Common myeloid progenitor, CD34-positive (primary cell): ENCODE measurements at regions of chr6 and their contacts with region 1.

Region 1: DNA sequence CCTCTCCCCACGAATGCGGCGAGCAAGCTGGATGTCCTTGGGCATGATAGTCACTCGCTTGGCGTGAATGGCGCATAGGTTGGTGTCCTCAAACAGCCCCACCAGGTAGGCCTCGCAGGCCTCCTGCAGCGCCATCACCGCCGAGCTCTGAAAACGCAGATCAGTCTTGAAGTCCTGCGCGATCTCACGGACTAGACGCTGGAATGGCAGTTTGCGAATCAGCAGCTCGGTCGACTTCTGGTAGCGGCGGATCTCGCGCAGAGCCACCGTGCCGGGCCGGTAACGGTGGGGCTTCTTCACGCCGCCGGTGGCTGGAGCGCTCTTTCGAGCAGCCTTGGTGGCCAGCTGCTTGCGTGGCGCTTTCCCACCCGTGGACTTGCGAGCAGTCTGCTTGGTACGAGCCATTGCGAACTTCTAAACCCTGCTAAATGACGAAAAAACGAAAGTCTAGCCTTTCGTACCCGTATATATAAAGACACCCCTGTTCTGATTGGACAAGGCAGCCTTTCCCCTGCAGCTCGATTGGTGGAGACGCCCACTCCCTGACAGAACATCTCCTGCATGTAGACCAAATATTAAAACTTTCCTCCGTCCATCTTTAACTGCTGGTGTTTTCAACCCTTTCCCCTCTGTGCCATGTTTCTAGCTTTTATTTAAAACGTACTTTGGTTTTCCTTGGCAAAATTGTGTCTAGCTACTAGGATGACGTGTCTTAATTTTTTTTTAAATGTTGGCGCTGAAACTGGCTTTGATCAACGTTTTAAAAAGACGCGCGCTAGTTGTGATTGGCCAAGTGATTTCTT is 109.8 kb downstream of the HFE start:
- DNase-seq: peak; percentile 93 to 97 (median 96)
- H3K4me3 ChIP-seq: peak overlapping the region; percentile 50 to 99 (median 96)
- H3K27ac ChIP-seq: peak overlapping the region; percentile 46 to 91
- H3K4me1 ChIP-seq: peaks cover 15 to 46% (median 36%) of the 10 kb centered on the region in 4 experiments
- H3K27me3 ChIP-seq: no peaks in the 10 kb centered on the region

Region 2: GRCh38 chr6:26122793-26123674 is 74.0 kb before region 1 on chr6:
- CTCF ChIA-PET with region 1: interaction called, 24 read pairs
- POLR2A ChIA-PET with region 1: interaction called, 22 read pairs
- DNase-seq: peak; percentile 97 to 99 (median 98)
- H3K4me3 ChIP-seq: peak overlapping the region; percentile 56 to 100 (median 96)
- H3K27ac ChIP-seq: peak overlapping the region; percentile 84 to 96
- H3K4me1 ChIP-seq: peaks cover 11 to 38% (median 26%) of the 10 kb centered on the region in 4 experiments
- H3K27me3 ChIP-seq: no peaks in the 10 kb centered on the region

Region 3: DNA sequence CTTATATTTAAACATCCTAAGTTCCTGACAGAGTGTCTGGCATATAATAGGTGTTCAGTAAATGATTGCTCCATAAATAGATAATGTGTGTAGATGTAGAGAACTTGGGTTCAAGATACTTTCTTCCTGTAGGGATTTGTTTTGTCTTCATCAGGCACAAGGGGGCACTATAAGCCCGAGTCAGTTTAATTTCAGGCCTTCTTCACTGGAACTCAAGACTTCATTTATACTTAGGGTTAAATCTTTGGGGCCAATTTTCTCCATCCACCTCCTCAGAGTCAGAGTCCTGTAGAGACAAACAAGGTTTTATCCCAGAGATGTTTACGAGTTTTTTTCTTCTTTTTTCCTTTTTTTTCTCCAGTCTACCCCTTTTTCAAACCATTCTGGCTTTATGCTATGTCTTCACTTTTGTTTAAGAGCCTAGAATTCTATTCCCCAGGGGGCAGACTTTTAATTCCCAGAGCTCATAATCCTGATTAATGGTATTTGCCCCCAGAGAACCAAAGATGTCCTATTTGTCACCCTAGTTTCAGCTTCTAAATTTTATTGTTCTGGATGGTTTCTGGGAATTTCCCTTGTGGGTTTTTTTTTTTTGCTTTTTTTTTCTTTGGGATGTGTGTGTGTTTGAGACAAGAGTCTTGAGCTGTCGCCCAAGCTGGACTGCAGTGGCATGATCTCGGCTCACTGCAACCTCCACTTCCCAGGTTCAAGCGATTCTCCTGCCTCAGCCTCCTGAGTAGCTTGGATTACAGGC is 21.4 kb before region 1 on chr6:
- CTCF ChIA-PET with region 1: interaction called, 33 read pairs
- POLR2A ChIA-PET with region 1: interaction called, 11 read pairs
- DNase-seq: peak; percentile 82 to 89 (median 85)
- H3K4me3 ChIP-seq: no peak overlapping the region
- H3K27ac ChIP-seq: no peak overlapping the region
- H3K4me1 ChIP-seq: peaks cover 6 to 34% (median 22%) of the 10 kb centered on the region in 4 experiments
- H3K27me3 ChIP-seq: no peaks in the 10 kb centered on the region

Region 4: DNA sequence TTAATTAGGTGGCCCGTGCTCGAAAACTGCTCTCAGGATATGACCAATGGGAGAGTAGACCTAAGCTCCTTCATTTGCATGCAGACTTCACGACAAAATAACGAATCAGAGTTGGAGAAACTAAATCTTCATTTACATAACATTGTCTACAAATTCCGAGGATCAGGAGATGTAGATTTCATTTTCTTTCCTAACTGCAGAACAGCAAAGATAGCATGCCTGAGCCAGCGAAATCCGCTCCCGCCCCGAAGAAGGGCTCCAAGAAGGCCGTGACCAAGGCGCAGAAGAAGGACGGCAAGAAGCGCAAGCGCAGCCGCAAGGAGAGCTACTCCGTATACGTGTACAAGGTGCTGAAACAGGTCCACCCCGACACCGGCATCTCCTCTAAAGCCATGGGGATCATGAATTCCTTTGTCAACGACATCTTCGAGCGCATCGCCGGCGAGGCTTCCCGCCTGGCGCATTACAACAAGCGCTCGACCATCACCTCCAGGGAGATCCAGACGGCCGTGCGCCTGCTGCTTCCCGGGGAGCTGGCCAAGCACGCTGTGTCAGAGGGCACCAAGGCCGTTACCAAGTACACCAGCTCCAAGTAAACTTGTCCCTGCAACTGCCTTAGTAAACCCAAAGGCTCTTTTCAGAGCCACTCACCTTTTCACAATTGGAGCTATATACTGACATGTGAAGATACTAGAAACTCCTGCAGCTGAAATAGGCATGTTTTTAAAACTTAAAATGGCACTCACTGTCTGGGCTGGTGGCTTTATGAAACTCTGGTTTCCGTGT is 13.3 kb before region 1 on chr6:
- CTCF ChIA-PET with region 1: interaction called, 76 read pairs
- POLR2A ChIA-PET with region 1: interaction called, 38 read pairs
- DNase-seq: peak; percentile 87 to 92 (median 91)
- H3K4me3 ChIP-seq: peak overlapping the region; percentile 46 to 79 (median 70)
- H3K27ac ChIP-seq: peak overlapping the region in 1 of 2 experiments; percentile 70
- H3K4me1 ChIP-seq: peaks cover 9 to 42% (median 27%) of the 10 kb centered on the region in 4 experiments
- H3K27me3 ChIP-seq: no peaks in the 10 kb centered on the region

Region 5: DNA sequence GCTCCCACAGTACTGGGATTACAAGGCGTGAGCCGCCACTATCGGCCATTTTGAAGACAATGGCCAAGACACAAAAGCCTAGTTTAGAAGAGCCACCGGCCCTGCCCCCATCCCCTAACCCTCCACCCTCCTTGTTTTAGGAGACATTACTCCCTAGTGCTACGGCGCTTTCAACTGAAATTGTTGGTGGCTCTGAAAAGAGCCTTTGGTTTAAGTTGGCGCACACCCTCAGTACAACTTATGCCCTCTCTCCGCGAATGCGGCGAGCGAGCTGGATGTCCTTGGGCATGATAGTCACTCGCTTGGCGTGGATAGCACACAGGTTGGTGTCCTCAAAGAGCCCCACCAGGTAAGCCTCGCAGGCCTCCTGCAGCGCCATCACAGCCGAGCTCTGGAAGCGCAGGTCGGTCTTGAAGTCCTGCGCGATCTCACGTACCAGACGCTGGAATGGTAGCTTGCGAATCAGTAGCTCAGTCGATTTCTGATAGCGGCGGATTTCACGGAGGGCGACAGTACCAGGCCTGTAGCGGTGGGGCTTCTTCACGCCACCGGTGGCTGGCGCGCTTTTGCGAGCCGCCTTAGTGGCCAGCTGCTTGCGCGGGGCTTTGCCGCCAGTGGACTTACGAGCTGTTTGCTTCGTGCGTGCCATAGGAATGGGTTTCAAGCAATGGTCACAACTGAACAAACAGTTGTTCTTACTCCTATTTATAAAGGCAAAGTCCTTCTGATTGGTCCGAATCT is 53.1 kb after region 1 on chr6:
- CTCF ChIA-PET with region 1: interaction called, 4 read pairs
- POLR2A ChIA-PET with region 1: interaction called, 19 read pairs
- DNase-seq: peak; percentile 85 to 92 (median 89)
- H3K4me3 ChIP-seq: peak overlapping the region; percentile 72 to 96 (median 82)
- H3K27ac ChIP-seq: peak overlapping the region; percentile 80 to 94
- H3K4me1 ChIP-seq: peaks cover 9 to 34% (median 20%) of the 10 kb centered on the region in 4 experiments
- H3K27me3 ChIP-seq: no peaks in the 10 kb centered on the region

Region 6: GRCh38 chr6:26295691-26296555 is 98.9 kb after region 1 on chr6:
- CTCF ChIA-PET with region 1: no interaction called
- POLR2A ChIA-PET with region 1: no interaction called
- DNase-seq: peak; percentile 42 to 85 (median 81)
- H3K4me3 ChIP-seq: peak overlapping the region in 2 of 7 experiments; percentile 24 to 33
- H3K27ac ChIP-seq: peak overlapping the region in 1 of 2 experiments; percentile 74
- H3K4me1 ChIP-seq: peaks cover 0 to 18% (median 14%) of the 10 kb centered on the region in 4 experiments
- H3K27me3 ChIP-seq: no peaks in the 10 kb centered on the region